ENCODE measurements at regions of chr16 and their contacts with region 1.

Region 1: GRCh38 chr16:29226782-29227181 is 179.7 kb downstream of the NPIPB11 start:
- DNase-seq: no peak
- ATAC-seq: no peak
- H3K4me3 ChIP-seq: no peak overlapping the region
- H3K27ac ChIP-seq: no peak overlapping the region
- H3K4me1 ChIP-seq: peaks cover 3 to 5% of the 10 kb centered on the region in 2 experiments; a peak in 3 of 4 replicates
- H3K27me3 ChIP-seq: no peaks in the 10 kb centered on the region
- CTCF ChIP-seq: no peak
- POLR2A ChIP-seq: no peak
- RAD21 ChIP-seq: no peak

Region 2: GRCh38 chr16:29315615-29316517 is 89.1 kb after region 1 on chr16:
- CTCF ChIA-PET with region 1: no interaction called
- POLR2A ChIA-PET with region 1: no interaction called
- RAD21 ChIA-PET with region 1: no interaction called
- intact Hi-C with region 1: loop called (anchors 5 kb)
- DNase-seq: no peak
- ATAC-seq: peak; percentile 78
- H3K4me3 ChIP-seq: no peak overlapping the region
- H3K27ac ChIP-seq: no peak overlapping the region
- H3K4me1 ChIP-seq: peaks cover 0 to 12% of the 10 kb centered on the region in 2 experiments; a peak in 2 of 4 replicates
- H3K27me3 ChIP-seq: no peaks in the 10 kb centered on the region
- CTCF ChIP-seq: peak; percentile 40 to 88 (median 40); a peak in 4 of 6 replicates
- POLR2A ChIP-seq: no peak
- RAD21 ChIP-seq: peak; percentile 92

Measured in HCT116 (cell line).